Activated B cell treated with CpG ODN at 0.5 μM for 24 hours (primary cell): ENCODE measurements at regions of chr1 and their contacts with region 1.

Region 1: DNA sequence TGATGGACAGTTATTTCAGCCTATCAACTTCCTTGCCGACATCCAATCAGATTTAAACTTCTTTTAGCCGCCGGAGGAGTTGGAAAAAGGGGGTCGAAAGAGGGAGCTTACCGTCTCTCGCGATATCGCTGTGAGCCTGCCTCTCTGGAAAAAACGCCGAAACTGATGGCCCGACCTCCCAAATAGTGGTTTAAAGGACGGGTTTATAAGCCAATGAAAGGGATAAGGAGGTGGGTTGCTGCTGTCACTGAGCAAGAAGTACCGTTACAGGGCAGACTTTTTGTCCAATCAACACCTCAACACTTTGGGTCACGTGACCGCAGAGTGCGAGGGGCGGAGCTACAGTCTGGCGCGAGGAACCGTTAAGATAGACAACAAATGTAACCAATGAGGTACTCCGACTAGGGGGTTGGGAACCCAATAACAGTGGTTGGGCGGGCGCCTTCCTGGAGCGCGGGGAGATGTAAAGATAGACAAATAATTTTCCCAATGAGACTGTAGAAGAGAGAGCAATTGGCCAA is at the start of gene RBM15:
- DNase-seq: peak; percentile 82
- ATAC-seq: peak; percentile 72
- H3K4me3 Mint-ChIP-seq: no peak within 1 kb of the TSS
- H3K27ac Mint-ChIP-seq: no peak within 1 kb of the TSS
- H3K4me1 Mint-ChIP-seq: peaks cover 51% of the 10 kb centered on the region
- H3K27me3 Mint-ChIP-seq: no peaks in the 10 kb centered on the region
- CTCF ChIP-seq: no peak
- total RNA-seq, gene RBM15: 52.7 and 61.1 TPM in 2 replicates

Region 2: GRCh38 chr1:109426278-109427170 is 912.4 kb before region 1 on chr1 and contains the start of gene PSMA5:
- CTCF ChIA-PET with region 1: no interaction called
- POLR2A ChIA-PET with region 1: no interaction called
- intact Hi-C with region 1: loop called (anchors 5 kb)
- DNase-seq: peak; percentile 81
- ATAC-seq: peak; percentile 97
- H3K4me3 Mint-ChIP-seq: peak within 1 kb of the TSS; percentile 96
- H3K27ac Mint-ChIP-seq: peak within 1 kb of the TSS; percentile 97
- H3K4me1 Mint-ChIP-seq: peaks cover 37% of the 10 kb centered on the region
- H3K27me3 Mint-ChIP-seq: no peaks in the 10 kb centered on the region
- CTCF ChIP-seq: no peak
- total RNA-seq, gene PSMA5: 105 and 125 TPM in 2 replicates

Region 3: GRCh38 chr1:109984456-109985275 is 354.3 kb before region 1 on chr1 and contains the start of gene AHCYL1:
- CTCF ChIA-PET with region 1: no interaction called
- POLR2A ChIA-PET with region 1: no interaction called
- intact Hi-C with region 1: no loop called
- DNase-seq: peak; percentile 97
- ATAC-seq: peak; percentile 99
- H3K4me3 Mint-ChIP-seq: peak within 1 kb of the TSS; percentile 98
- H3K27ac Mint-ChIP-seq: peak within 1 kb of the TSS; percentile 93
- H3K4me1 Mint-ChIP-seq: peaks cover 37% of the 10 kb centered on the region
- H3K27me3 Mint-ChIP-seq: peaks cover 5% of the 10 kb centered on the region
- CTCF ChIP-seq: peak; percentile 56
- total RNA-seq, gene AHCYL1: 40.5 and 41.6 TPM in 2 replicates

Region 4: DNA sequence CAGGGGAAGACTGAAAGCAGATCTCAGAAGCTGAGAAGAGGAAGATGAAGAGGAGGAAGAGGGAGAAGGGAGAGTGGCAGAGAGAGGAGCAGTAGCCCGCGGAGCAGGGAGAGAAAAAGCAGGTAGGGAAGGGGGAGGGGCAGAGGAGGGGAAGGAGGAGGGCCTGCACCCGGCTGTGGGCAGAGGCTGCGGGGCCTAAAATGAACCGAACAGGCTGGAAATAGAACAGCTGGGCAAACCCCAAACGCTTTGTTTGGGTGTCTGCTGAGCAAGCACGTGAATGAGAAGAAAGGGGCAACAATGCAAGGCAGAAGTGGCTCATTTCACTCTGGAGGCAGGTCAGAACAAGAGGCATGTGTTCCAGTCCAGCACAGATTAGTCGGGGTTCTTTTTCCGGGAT is 95.4 kb before region 1 on chr1:
- CTCF ChIA-PET with region 1: no interaction called
- POLR2A ChIA-PET with region 1: interaction called, 3 read pairs
- intact Hi-C with region 1: loop called (anchors 1 kb)
- DNase-seq: peak; percentile 30
- ATAC-seq: peak; percentile 89
- H3K4me3 Mint-ChIP-seq: peak overlapping the region; percentile 71
- H3K27ac Mint-ChIP-seq: peak overlapping the region; percentile 73
- H3K4me1 Mint-ChIP-seq: peaks cover 37% of the 10 kb centered on the region
- H3K27me3 Mint-ChIP-seq: no peaks in the 10 kb centered on the region
- CTCF ChIP-seq: no peak

Region 5: DNA sequence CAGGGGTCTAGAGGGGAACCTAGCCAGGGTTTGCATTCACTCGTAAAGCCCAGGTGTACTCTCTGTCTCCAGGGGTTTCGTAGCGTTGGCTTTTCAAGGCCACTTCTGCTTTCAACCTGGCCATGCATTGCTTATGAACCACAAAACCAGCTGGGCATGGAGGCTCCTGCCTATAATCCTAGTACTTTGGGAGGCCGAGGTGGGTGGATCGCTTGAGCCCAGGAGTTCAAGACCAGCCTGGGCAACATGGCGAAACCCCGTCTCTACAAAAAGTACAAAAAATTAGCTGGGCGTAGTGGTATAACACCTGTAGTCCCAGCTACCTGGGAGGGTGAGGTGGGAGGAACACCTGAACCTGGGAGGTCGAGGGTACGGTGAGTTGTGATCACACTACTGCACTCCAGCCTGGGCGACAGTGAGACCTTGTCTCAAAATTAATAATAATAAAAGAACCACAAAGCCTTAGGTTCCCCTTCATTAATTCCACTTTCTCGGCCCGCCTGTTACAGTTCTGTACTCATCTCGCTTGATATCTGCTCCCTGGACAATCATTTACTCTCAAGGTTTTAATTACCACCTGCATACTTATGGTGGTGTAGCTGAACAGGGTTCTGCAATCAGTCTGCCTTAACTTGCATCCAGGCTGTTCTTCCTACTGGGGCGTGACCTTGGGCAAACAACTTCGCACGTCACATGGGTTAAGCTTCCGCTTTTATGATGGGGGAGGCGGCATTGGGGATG is 45.8 kb after region 1 on chr1:
- CTCF ChIA-PET with region 1: interaction called, 68 read pairs
- POLR2A ChIA-PET with region 1: interaction called, 262 read pairs
- intact Hi-C with region 1: loop called (anchors 1 kb)
- DNase-seq: peak; percentile 59
- ATAC-seq: peak; percentile 77
- H3K4me3 Mint-ChIP-seq: peak overlapping the region; percentile 55
- H3K27ac Mint-ChIP-seq: peak overlapping the region; percentile 95
- H3K4me1 Mint-ChIP-seq: peaks cover 95% of the 10 kb centered on the region
- H3K27me3 Mint-ChIP-seq: no peaks in the 10 kb centered on the region
- CTCF ChIP-seq: no peak

Region 6: GRCh38 chr1:110460253-110461220 is 121.6 kb after region 1 on chr1:
- CTCF ChIA-PET with region 1: interaction called, 46 read pairs
- POLR2A ChIA-PET with region 1: interaction called, 16 read pairs
- intact Hi-C with region 1: loop called (anchors 1 kb)
- DNase-seq: peak; percentile 68
- ATAC-seq: peak; percentile 99
- H3K4me3 Mint-ChIP-seq: no peak overlapping the region
- H3K27ac Mint-ChIP-seq: no peak overlapping the region
- H3K4me1 Mint-ChIP-seq: no peaks in the 10 kb centered on the region
- H3K27me3 Mint-ChIP-seq: no peaks in the 10 kb centered on the region
- CTCF ChIP-seq: peak; percentile 96

Region 7: DNA sequence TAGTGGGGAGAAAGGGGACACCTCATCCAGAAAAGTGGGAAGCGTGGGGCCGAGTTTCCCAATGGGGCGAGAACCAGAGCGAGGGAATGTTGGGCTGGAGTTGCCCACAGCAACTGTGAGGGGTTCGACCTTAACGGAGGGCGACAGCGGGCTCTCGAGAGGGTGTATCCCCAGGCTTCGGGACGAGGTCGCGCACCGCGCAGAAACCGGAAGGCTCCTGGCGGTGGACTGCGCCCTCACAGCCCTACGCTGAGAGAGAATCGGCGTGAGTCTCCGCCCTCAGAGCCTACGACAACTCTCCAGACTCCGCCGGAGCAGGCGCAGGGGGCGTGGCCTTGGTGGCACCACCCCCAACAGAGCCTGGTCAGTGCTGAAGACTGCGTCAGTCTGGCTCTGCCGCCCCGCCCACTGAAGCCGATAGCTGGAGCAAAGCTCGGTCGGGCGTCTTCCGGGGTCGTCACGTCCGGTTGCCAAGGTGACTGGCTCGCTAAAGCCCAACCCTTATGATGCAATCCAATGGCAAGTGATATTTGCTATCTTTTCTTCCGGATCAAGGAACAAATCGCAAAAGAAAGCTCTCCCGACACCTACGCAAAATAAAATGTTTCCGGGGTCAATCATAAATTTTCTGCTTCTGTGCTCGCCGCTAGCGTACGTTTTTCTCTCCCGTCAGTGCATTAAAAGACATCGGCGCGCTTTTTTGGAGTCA is 624.9 kb after region 1 on chr1 and contains the start of gene LRIF1:
- CTCF ChIA-PET with region 1: interaction called, 3 read pairs
- POLR2A ChIA-PET with region 1: interaction called, 6 read pairs
- intact Hi-C with region 1: loop called (anchors 1 kb)
- DNase-seq: peak; percentile 99
- ATAC-seq: peak; percentile 97
- H3K4me3 Mint-ChIP-seq: peak within 1 kb of the TSS; percentile 84
- H3K27ac Mint-ChIP-seq: peak within 1 kb of the TSS; percentile 91
- H3K4me1 Mint-ChIP-seq: peaks cover 38% of the 10 kb centered on the region
- H3K27me3 Mint-ChIP-seq: peaks cover 10% of the 10 kb centered on the region
- CTCF ChIP-seq: no peak
- total RNA-seq, gene LRIF1: 16.7 and 17.0 TPM in 2 replicates